Activated T-helper 2 cell treated with anti-CD3 and anti-CD28 coated beads, Interferon-gamma antibody, Interleukin-2, Interleukin-4, amounts not matched to agents 10 μg/mL and 5 μg/mL and 100 μg/mL, durations not matched to agents 14 hours and 24 hours and 36 hours (primary cell): ENCODE measurements at regions of chr5 and their contacts with region 1.

Region 1: GRCh38 chr5:149990518-149991376 is 9.7 kb downstream of the TIGD6 start:
- DNase-seq: peak; percentile 46
- H3K4me3 Mint-ChIP-seq: no peak overlapping the region
- H3K27ac Mint-ChIP-seq: no peak overlapping the region
- H3K4me1 Mint-ChIP-seq: peaks cover 4% of the 10 kb centered on the region
- H3K27me3 Mint-ChIP-seq: no peaks in the 10 kb centered on the region

Region 2: DNA sequence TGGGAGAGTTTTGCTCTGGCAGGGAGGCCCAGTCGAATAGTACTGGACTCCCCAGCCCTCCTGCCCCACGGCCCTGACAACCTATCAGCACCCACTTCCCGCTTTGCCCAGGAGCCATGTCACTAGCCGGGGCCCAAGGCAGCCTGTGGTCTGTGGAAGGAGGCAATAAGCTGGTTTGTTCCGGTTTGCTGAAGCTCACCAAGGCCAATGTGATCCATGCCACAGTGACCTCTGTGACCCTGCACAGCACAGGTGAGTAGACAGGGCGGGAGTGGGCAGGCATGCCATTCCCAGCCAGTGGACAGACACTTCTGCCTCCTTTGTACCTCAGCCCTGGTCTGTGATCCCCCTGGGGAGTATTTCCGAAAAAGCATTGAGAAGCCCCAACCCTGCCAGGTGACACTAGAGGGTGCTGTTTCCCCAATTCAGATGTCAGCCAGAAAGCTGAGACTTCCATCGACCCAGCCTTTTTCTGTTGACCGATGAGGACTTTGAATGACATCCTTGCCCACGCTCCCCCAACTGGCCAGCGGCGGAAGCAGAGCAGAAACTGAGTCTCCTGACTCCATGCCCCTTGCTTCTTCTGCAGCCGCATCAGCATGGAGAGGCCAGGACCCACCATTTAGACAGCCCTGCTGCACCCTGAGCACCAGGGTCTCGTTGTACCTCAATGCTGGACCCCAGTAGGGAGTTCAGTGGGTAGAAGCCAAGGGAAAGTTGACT is 623.3 kb before region 1 on chr5:
- intact Hi-C with region 1: no loop called
- DNase-seq: peak; percentile 32
- H3K4me3 Mint-ChIP-seq: no peak overlapping the region
- H3K27ac Mint-ChIP-seq: no peak overlapping the region
- H3K4me1 Mint-ChIP-seq: peaks cover 7% of the 10 kb centered on the region
- H3K27me3 Mint-ChIP-seq: no peaks in the 10 kb centered on the region

Region 3: GRCh38 chr5:149636851-149637246 is 353.9 kb before region 1 on chr5:
- intact Hi-C with region 1: loop called (anchors 1 kb)
- DNase-seq: no peak
- H3K4me3 Mint-ChIP-seq: no peak overlapping the region
- H3K27ac Mint-ChIP-seq: no peak overlapping the region
- H3K4me1 Mint-ChIP-seq: peaks cover 18% of the 10 kb centered on the region
- H3K27me3 Mint-ChIP-seq: no peaks in the 10 kb centered on the region

Region 4: GRCh38 chr5:149646564-149646963 is 344.2 kb before region 1 on chr5:
- intact Hi-C with region 1: loop called (anchors 5 kb)
- DNase-seq: no peak
- H3K4me3 Mint-ChIP-seq: no peak overlapping the region
- H3K27ac Mint-ChIP-seq: no peak overlapping the region
- H3K4me1 Mint-ChIP-seq: no peaks in the 10 kb centered on the region
- H3K27me3 Mint-ChIP-seq: no peaks in the 10 kb centered on the region

Region 5: GRCh38 chr5:149834246-149834855 is 156.4 kb before region 1 on chr5:
- intact Hi-C with region 1: loop called (anchors 1 kb)
- DNase-seq: peak; percentile 33
- H3K4me3 Mint-ChIP-seq: no peak overlapping the region
- H3K27ac Mint-ChIP-seq: no peak overlapping the region
- H3K4me1 Mint-ChIP-seq: peaks cover 6% of the 10 kb centered on the region
- H3K27me3 Mint-ChIP-seq: no peaks in the 10 kb centered on the region